MCF 10A (cell line): ENCODE measurements at regions of chr20 and their contacts with region 1.

Region 1: DNA sequence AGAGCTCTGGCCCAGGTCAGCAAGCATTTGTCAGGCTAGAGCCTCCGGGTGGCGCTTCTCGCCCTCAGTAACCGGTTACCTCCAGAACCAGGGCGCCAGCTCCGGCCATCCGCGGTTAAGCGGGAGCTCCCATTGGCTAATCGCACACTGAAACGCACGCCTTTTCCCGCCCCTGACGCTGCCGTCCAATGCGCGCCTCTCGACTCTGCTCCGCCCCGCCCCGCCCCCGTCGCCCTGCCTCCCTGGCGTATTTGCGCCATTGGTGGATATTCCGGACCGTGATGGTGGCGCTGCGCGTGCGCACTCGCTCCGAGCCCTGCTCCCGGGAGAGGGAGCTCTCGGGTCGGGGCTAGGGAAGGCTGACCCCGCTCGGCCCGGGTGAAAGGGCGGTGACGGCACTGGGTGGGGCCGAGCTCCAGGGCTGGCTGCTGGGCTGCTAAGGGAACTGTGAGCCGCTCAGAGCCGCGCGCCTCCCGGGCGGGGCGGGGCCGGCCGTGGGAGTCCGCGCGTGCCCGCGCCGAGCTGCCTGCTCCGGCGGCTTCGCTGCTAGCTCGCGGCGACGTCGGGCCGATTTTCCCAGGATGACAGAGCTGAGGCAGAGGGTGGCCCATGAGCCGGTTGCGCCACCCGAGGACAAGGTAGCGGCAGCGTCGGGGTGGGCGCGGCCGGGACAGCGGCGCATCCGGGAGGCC is at the start of gene CDS2:
- DNase-seq: peak; percentile 98
- H3K4me3 Mint-ChIP-seq: peak within 1 kb of the TSS; percentile 76
- H3K27ac Mint-ChIP-seq: peak within 1 kb of the TSS; percentile 36
- H3K4me1 Mint-ChIP-seq: peaks cover 30% of the 10 kb centered on the region
- H3K27me3 Mint-ChIP-seq: no peaks in the 10 kb centered on the region
- CTCF ChIP-seq: peak; percentile 65
- total RNA-seq, gene CDS2: 26.3 and 26.8 TPM in 2 replicates

Region 2: GRCh38 chr20:5146871-5147592 is 20.4 kb after region 1 on chr20:
- CTCF ChIA-PET with region 1: interaction called, 10 read pairs
- POLR2A ChIA-PET with region 1: interaction called, 10 read pairs
- intact Hi-C with region 1: no loop called
- DNase-seq: no peak
- H3K4me3 Mint-ChIP-seq: no peak overlapping the region
- H3K27ac Mint-ChIP-seq: no peak overlapping the region
- H3K4me1 Mint-ChIP-seq: peaks cover 15% of the 10 kb centered on the region
- H3K27me3 Mint-ChIP-seq: no peaks in the 10 kb centered on the region
- CTCF ChIP-seq: no peak

Region 3: DNA sequence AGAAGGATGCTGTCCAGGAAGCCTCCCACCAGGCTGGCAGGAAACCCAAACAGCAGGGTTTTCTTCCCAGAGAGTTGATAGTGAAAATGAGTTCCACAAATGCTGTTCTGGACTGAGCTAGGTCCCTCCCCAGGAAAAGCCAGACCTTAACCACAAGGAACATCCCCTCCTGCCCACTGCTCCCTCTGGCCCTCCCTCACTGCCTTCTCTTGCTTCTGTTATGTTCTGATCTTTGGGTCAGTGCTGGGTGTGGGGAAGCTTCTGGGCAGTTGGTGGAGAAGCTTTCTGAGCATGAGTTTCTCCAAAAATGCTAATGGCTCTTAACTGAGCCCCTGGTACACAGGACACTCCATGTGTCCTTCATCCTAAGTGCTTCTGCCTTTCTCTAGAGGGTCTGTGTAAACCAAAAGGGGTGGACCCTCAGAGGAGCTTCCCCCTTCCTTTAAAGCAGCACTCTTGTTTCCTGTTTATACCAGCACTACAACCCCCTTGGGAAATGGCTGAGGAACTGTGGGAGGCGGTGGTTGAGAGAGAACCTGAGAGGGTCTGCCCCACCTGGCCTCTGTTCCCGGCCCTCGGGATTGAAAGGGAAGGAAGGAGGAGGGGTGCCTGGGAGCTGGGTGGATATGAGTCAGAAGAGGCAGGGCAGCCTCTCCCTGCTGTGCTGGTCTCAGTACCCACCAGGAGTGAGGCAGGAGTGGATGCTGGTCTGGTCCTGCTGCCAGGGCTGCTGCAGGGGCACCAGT is 42.2 kb after region 1 on chr20:
- CTCF ChIA-PET with region 1: interaction called, 22 read pairs
- POLR2A ChIA-PET with region 1: interaction called, 4 read pairs
- intact Hi-C with region 1: no loop called
- DNase-seq: peak; percentile 46
- H3K4me3 Mint-ChIP-seq: no peak overlapping the region
- H3K27ac Mint-ChIP-seq: no peak overlapping the region
- H3K4me1 Mint-ChIP-seq: peaks cover 15% of the 10 kb centered on the region
- H3K27me3 Mint-ChIP-seq: no peaks in the 10 kb centered on the region
- CTCF ChIP-seq: no peak

Region 4: DNA sequence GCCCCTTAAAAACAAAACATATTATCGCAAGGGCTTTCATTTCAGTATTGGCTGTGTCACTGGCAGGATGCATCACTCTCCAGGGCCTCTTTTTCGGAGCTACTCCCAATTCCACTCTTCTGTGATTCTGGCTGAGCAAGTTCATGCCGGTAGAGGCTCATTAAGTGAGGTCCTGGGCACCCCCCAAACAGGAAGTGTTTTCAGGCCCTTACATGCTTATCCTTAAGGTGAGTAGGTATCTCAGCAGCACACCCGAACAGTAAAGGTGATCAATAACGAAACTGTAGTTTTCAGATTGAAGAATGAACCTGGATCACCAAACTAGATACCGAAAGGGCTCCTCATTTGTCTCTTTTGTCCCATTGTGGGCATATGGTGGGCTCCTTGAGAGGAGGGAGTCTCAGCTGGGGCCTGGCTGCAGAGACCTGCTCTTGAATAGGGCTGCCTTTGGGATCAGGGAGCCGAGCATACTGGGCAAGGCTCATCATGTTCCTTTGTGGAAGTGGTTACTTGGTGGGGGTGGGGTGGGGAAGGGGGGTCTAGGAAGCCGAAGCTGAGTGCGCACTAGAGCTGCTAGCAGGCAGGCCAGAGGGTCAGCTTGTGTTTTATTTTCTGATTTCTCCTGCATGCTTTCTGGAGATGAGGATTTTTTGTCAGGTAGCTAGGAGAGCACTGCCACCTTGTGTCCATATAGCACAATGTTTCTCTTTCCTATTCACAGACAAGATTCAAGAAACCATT is 65.3 kb after region 1 on chr20:
- CTCF ChIA-PET with region 1: interaction called, 162 read pairs
- POLR2A ChIA-PET with region 1: interaction called, 56 read pairs
- intact Hi-C with region 1: loop called (anchors 1 kb)
- DNase-seq: peak; percentile 81
- H3K4me3 Mint-ChIP-seq: no peak overlapping the region
- H3K27ac Mint-ChIP-seq: no peak overlapping the region
- H3K4me1 Mint-ChIP-seq: no peaks in the 10 kb centered on the region
- H3K27me3 Mint-ChIP-seq: no peaks in the 10 kb centered on the region
- CTCF ChIP-seq: peak; percentile 81

Region 5: DNA sequence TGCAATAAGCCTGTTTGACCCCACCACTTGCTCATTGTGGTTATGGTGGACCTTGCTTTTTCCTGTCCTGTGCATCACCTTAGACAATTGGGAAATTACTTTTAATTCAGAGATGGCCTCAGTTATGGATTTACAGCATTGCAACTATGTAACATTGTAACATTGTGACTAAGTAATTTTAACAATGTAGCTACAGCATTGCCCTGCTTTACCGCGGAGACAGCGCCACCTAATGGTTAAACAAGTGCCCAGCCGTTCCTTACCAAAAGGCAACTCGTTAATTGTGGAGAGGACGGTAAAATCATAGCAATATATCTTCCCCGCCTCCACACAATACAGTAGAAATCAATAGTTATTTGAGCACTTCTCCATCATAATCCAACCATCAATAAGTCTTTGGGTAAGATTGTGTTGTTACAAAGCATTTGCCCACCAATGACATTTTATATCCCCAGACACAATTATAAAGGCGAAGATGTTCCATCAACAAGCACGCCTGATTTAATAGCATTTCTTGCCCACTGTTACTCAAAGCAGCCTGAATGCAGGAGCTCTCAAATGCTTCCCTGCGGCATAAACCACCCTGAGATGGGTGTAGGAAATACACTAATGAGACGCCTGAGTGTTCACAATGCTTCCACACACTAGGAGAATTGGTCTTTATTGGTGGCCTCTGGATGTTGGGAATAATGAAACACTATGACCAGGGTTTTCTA is 96.4 kb after region 1 on chr20:
- CTCF ChIA-PET with region 1: interaction called, 5 read pairs
- POLR2A ChIA-PET with region 1: no interaction called
- intact Hi-C with region 1: loop called (anchors 1 kb)
- DNase-seq: peak; percentile 66
- H3K4me3 Mint-ChIP-seq: no peak overlapping the region
- H3K27ac Mint-ChIP-seq: no peak overlapping the region
- H3K4me1 Mint-ChIP-seq: no peaks in the 10 kb centered on the region
- H3K27me3 Mint-ChIP-seq: peaks cover 51% of the 10 kb centered on the region
- CTCF ChIP-seq: peak; percentile 81

Region 6: GRCh38 chr20:5550733-5551529 is 424.3 kb after region 1 on chr20:
- CTCF ChIA-PET with region 1: no interaction called
- POLR2A ChIA-PET with region 1: no interaction called
- intact Hi-C with region 1: no loop called
- DNase-seq: no peak
- H3K4me3 Mint-ChIP-seq: no peak overlapping the region
- H3K27ac Mint-ChIP-seq: no peak overlapping the region
- H3K4me1 Mint-ChIP-seq: peaks cover 6% of the 10 kb centered on the region
- H3K27me3 Mint-ChIP-seq: no peaks in the 10 kb centered on the region
- CTCF ChIP-seq: no peak